AG04450 (cell line): ENCODE measurements at regions of chr14 and their contacts with region 1.

Region 1: GRCh38 chr14:53011053-53011462 is 60.2 kb upstream of the FERMT2 start:
- DNase-seq: peak; percentile 96
- H3K4me3 ChIP-seq: peak overlapping the region; percentile 12; the same call in 1 of the 2 replicates
- H3K27ac ChIP-seq: peak overlapping the region; percentile 81
- H3K27me3 ChIP-seq: no peaks in the 10 kb centered on the region
- CTCF ChIP-seq: no peak

Region 2: DNA sequence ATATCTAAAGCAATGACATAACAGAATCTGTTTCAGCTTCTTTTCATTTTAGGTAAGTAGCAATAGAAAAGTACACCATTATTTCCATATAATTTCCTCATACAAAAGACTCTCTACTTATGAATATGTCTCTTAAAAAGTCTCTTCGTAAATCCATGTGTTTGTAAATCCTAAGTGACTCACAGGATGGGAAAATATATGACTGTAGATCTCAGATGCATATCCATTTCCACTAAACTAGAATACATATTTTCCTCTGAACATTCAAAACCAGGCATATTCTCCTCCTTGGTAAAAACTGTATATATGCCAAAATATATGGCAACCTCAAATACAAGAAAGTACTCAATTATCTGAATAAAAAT is 552.4 kb before region 1 on chr14:
- CTCF ChIA-PET with region 1: no interaction called
- POLR2A ChIA-PET with region 1: no interaction called
- DNase-seq: no peak
- H3K4me3 ChIP-seq: no peak overlapping the region; the same call in 1 of the 2 replicates
- H3K27ac ChIP-seq: no peak overlapping the region
- H3K27me3 ChIP-seq: no peaks in the 10 kb centered on the region
- CTCF ChIP-seq: no peak

Region 3: GRCh38 chr14:52950898-52951689 is 60.0 kb before region 1 on chr14 and contains the start of gene FERMT2:
- CTCF ChIA-PET with region 1: no interaction called
- POLR2A ChIA-PET with region 1: interaction called, 14 read pairs
- DNase-seq: peak; percentile 69
- H3K4me3 ChIP-seq: peak within 1 kb of the TSS; percentile 100
- H3K27ac ChIP-seq: peak within 1 kb of the TSS; percentile 99
- H3K27me3 ChIP-seq: no peaks in the 10 kb centered on the region
- CTCF ChIP-seq: no peak
- polyA plus RNA-seq, gene FERMT2: 336 and 485 TPM in 2 replicates

Region 4: DNA sequence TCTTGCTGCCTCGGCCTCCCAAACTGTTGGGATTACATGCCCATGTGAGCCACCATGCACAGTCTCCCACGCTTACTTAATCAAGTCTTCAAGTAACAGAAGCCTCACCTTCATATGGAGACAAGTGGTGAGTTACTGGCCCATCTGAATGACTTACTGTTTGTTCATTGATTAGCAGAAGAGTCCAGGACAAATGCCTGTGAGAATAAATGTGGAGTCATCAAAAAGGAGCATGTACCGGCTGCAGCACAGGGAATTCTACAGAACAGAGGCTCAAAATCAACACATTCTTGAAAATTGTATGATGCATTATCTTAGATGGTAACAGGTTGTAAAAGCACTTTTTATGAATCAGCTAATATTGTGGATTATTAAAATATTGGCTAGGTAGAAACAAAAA is 12.3 kb after region 1 on chr14:
- CTCF ChIA-PET with region 1: no interaction called
- POLR2A ChIA-PET with region 1: no interaction called
- DNase-seq: no peak
- H3K4me3 ChIP-seq: no peak overlapping the region
- H3K27ac ChIP-seq: no peak overlapping the region
- H3K27me3 ChIP-seq: no peaks in the 10 kb centered on the region
- CTCF ChIP-seq: no peak

Region 5: DNA sequence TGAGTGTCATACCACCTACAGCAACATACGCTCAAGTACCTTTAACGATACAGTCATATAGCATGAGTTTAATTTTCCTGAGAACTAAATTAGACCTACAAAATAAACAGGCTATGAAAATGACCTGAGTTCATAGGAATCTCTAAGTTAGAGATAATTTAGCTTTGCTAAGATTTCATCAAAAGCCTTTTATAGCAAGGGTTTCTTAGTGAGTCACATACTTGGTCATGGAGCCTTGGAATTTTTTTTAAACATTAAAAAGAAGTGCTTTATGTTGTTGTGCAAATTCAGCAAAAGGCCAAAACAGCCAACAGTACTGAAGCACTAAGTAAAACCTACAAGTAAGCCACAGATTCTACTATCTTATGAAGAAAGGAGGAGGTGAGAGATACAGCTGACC is 33.4 kb after region 1 on chr14:
- CTCF ChIA-PET with region 1: no interaction called
- POLR2A ChIA-PET with region 1: interaction called, 10 read pairs
- DNase-seq: no peak
- H3K4me3 ChIP-seq: no peak overlapping the region
- H3K27ac ChIP-seq: peak overlapping the region; percentile 58
- H3K27me3 ChIP-seq: no peaks in the 10 kb centered on the region
- CTCF ChIP-seq: no peak